ENCODE measurements at regions of chr9 and their contacts with region 1.

Region 1: GRCh38 chr9:98860871-98861293 is 53.4 kb downstream of the GALNT12 start:
- DNase-seq: peak; percentile 76
- ATAC-seq: peak; percentile 84

Region 2: GRCh38 chr9:98916660-98917059 is 55.8 kb after region 1 on chr9:
- intact Hi-C with region 1: loop called (anchors 10 kb)
- DNase-seq: peak; percentile 81
- ATAC-seq: peak; percentile 88

Region 3: DNA sequence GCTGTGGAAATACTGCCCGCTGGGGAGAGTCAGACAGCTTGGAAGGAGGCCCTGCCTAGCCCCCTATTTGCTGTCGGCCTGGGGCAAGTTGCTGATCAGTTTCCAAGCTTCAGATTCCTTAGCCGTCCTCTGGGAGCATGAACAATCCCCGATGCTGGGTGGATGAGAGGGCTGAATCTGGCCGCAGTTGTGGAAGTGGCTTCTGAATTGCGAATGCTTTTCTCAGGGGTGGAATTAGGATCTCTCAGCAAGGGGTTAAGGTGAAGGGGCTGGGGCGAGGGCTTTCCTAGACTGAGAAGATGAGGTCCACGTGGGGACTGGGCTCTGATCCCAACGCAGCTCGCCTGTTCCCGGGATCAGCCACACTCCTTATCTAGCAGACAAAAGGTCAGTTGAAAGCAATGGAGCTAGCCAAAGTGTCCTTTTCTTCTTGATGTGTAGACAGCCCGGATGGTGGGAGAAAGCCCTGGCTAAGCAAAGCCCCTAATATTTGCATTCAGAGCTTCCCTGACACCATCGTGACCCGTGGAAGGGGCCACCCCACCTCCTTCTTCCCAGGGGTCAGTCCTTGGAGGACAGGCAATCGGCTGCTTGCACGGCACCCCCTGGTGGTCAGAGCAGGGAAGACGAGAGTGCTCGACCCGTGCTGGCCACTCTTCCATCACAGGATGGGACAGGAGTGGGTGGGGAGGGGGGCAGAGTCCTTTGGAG is 137.7 kb after region 1 on chr9:
- intact Hi-C with region 1: loop called (anchors 5 kb)
- DNase-seq: peak; percentile 91
- ATAC-seq: peak; percentile 86

Region 4: GRCh38 chr9:99012942-99013512 is 152.1 kb after region 1 on chr9:
- intact Hi-C with region 1: loop called (anchors 5 kb)
- DNase-seq: no peak
- ATAC-seq: peak; percentile 88

Region 5: DNA sequence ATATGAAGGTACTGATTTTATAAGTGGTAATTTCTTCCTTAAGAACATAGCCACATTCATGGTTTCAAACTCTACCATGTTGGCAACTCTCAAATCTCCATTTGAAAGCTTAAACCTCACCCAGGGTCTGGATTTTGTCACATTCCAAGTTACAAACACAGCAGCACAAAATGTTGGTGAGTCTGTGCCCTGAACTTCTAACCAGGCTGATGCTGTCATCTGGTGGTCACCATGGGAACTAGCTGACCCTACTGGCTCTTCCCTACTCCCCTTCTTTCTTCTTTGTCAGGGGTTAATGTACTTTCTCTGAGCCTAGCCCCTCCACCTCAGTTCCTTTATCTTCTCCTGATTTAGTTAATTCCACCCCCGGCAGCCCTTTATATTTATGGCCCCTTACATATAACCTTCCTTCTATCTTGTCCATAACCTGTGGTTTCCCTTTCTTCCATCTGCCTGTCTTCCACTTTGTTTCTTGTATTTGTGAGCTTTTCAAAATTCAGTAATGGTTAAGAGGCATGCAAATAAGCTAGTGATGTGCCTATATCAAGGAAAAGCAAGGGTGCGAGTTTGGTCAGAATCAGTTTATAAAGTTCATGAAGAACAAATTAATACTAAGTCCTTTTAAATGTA is 279.9 kb after region 1 on chr9:
- intact Hi-C with region 1: loop called (anchors 5 kb)
- DNase-seq: no peak
- ATAC-seq: peak; percentile 83